ENCODE measurements at regions of chr10 and their contacts with region 1.

Region 1: GRCh38 chr10:26755443-26755903 is 58.0 kb downstream of the PDSS1 start:
- DNase-seq: no peak
- H3K4me3 ChIP-seq: no peak overlapping the region
- H3K27ac ChIP-seq: no peak overlapping the region
- H3K27me3 ChIP-seq: no peaks in the 10 kb centered on the region
- CTCF ChIP-seq: no peak

Region 2: DNA sequence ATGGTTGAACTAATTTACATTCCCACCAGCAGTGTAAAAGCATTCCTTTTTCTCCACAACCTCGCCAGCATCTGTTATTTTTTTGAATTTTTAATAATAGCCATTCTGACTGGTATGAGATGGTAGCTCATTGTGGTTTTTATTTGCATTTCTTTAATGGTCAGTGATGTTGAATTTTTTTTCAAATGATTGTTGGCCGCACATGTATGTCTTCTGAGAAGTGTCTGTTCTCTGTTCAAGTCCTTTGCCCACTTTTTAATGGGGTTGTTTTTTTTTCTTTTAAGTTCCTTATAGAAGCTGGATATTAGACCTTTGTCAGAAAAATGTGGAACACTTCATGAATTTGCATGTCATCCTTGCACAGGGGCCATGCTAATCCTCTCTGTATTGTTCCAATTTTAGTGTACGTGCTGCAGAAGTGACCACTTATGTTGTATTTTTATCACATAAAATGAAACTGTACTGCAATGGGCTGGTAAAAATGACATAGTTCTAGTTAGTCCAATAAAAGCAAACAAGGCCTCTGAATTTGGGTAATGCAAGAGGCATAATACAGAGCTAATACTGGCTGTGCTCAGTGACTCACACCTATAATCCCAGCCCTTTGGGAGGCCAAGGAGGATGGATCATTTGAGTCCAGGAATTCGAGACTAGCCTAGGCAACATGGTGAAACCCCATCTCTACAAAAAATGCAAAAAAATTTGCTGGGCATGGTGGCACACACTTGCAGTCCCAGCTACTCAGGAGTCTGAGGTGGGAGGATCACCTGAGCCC is 34.9 kb after region 1 on chr10:
- CTCF ChIA-PET with region 1: interaction called, 11 read pairs
- POLR2A ChIA-PET with region 1: no interaction called
- DNase-seq: no peak
- H3K4me3 ChIP-seq: no peak overlapping the region
- H3K27ac ChIP-seq: no peak overlapping the region
- H3K27me3 ChIP-seq: no peaks in the 10 kb centered on the region
- CTCF ChIP-seq: no peak